ENCODE measurements at regions of chr9 and their contacts with region 1.

Region 1: DNA sequence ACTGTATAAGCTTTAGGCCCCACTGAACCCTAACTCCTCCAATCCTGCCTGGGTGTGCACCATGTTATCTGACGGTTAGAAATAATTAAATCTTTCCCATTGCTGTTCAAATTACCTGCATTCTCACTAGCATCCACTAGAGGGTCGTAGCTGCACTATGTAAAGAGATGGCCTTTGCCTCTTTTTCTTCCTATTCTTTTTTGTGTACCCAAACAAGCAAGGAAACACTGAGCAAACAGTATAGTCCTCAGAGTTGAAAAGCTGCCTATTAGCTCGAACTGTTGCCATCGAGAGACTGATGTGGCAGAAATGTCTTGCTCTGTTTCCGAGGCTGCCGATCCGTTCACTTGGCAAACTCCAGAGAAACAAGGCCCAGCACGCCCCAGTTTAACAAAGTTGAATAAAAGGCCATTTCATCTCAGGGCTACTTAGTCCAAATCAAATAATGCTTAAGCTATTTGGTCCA is 163.8 kb upstream of the TRPM3 start:
- DNase-seq: peak; percentile 29
- H3K4me3 ChIP-seq: no peak overlapping the region
- CTCF ChIP-seq: peak; percentile 73

Region 2: GRCh38 chr9:71270554-71270953 is 14.7 kb before region 1 on chr9:
- CTCF ChIA-PET with region 1: interaction called, 12 read pairs
- POLR2A ChIA-PET with region 1: no interaction called
- DNase-seq: no peak
- H3K4me3 ChIP-seq: no peak overlapping the region
- CTCF ChIP-seq: no peak

Region 3: DNA sequence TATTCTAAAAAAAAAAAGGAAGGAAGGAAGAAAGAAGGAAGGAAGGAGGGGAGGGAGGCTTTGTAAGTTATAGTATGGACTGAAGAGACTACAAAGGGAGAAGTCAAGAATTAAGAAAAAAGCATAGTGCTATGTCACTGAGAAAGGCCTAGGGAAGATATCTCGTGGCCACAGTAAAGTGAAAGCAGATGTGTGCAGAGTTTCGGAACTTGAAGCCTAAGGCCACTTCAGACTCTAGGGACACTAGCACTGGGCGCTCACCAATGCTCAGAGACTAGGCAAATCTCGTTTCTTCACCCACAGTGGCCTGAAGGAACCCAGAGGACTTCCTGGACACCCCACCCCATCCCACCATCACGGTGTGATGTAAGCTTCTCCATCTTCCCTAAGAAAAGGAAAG is 17.6 kb after region 1 on chr9:
- CTCF ChIA-PET with region 1: interaction called, 40 read pairs
- POLR2A ChIA-PET with region 1: no interaction called
- DNase-seq: no peak
- H3K4me3 ChIP-seq: no peak overlapping the region
- CTCF ChIP-seq: no peak

Region 4: DNA sequence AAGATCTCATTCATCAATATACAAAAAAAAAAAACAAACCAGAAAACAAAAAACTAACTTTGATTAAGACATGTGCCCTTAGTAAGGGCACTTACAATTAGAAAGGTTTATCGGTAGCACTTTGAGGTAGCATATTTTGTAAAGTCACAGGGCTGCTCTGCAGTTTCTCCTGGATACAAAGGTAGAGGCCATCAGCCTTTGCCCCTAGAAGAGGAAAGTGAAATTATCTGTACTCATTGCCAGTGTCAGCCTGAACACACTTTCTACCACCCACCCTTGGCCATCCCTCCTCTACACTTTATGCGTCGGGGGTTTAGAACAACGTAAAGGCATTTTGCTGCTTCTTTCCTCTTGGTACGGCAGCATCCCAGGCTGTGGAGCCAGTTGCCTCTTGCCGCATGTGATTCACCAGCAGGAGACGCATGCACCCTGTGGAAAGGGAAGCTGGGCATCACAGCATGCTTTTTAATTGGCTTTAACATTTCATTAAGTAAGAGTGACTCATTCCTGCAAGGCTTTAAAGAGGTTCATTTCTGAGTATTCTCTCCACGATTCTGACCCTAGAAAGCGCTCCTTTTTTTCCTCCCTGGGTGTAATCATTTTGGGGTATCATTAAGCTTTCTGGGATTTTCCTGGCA is 398.5 kb after region 1 on chr9:
- CTCF ChIA-PET with region 1: interaction called, 20 read pairs
- POLR2A ChIA-PET with region 1: no interaction called
- DNase-seq: no peak
- H3K4me3 ChIP-seq: no peak overlapping the region
- CTCF ChIP-seq: peak; percentile 64

Measured in AG04449 (cell line).